Transverse colon (tissue), 4 donors: ENCODE measurements at regions of chr21 and their contacts with region 1.

Region 1: GRCh38 chr21:17501107-17502006 is 11.5 kb upstream of the CXADR start:
- DNase-seq: no peak
- H3K4me3 ChIP-seq: no peak overlapping the region
- H3K27ac ChIP-seq: no peak overlapping the region
- H3K4me1 ChIP-seq: peaks cover 0 to 7% (median 0%) of the 10 kb centered on the region in 4 donors
- H3K27me3 ChIP-seq: no peaks in the 10 kb centered on the region
- CTCF ChIP-seq: no peak
- EP300 ChIP-seq: no peak
- POLR2A ChIP-seq: no peak

Region 2: DNA sequence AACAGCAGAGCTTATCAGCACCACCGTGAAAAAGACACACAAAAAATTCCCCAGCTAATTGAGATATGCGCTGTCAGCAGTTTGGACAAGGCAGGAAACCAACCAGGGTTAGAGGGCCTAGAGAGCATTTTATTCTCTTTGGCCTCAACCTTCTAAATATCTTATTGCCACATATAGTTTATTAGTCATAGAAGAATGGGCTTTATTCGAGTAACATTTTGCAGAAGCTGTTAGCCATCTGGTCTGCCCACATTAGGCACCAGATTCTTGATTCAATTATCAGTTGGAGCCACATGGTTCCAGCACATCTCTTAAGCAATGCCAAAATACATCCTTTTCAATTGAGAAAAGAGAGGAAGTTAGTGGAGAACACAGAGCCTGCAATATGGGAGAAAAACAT is 98.4 kb before region 1 on chr21:
- in situ Hi-C with region 1: no loop called
- intact Hi-C with region 1: no loop called
- DNase-seq: no peak
- H3K4me3 ChIP-seq: no peak overlapping the region
- H3K27ac ChIP-seq: no peak overlapping the region
- H3K4me1 ChIP-seq: no peaks in the 10 kb centered on the region
- H3K27me3 ChIP-seq: no peaks in the 10 kb centered on the region
- CTCF ChIP-seq: no peak
- EP300 ChIP-seq: no peak
- POLR2A ChIP-seq: no peak

Region 3: DNA sequence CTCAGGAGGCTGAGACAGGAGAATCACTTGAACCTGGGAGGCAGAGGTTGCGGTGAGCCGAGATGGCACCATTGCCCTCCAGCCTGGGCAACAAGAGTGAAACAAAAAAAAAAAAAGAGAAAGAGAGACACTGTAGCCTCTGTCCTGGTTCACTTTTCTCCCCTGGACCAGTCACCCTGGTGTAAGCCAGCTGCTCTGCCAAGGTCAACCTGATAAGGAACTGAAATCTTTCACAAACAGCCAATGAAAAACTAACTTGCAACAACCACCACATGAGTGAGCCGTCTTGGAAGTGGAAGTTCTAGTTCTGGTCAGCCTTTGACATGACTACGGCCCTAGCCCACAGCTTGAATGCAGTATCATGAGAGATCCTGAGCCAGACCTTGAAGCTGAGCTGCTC is 25.4 kb before region 1 on chr21:
- in situ Hi-C with region 1: no loop called
- intact Hi-C with region 1: loop called (anchors 2 kb)
- DNase-seq: no peak
- H3K4me3 ChIP-seq: no peak overlapping the region
- H3K27ac ChIP-seq: no peak overlapping the region
- H3K4me1 ChIP-seq: peaks cover 3 to 22% (median 13%) of the 10 kb centered on the region in 4 donors
- H3K27me3 ChIP-seq: no peaks in the 10 kb centered on the region
- CTCF ChIP-seq: no peak
- EP300 ChIP-seq: no peak
- POLR2A ChIP-seq: no peak